Heart left ventricle (tissue), 16 donors: ENCODE measurements at regions of chr15 and their contacts with region 1.

Region 1: GRCh38 chr15:71114896-71115554 is at the start of gene THSD4:
- DNase-seq: peak; percentile 71 to 83 (median 79)
- ATAC-seq: peak; percentile 27 to 71 (median 66)
- H3K4me3 ChIP-seq: peak within 1 kb of the TSS; percentile 57 to 90 (median 71)
- H3K27ac ChIP-seq: peak within 1 kb of the TSS; percentile 78 to 95 (median 90)
- H3K4me1 ChIP-seq: peaks cover 0 to 27% (median 5%) of the 10 kb centered on the region in 12 donors
- H3K27me3 ChIP-seq: peaks cover 0 to 29% (median 0%) of the 10 kb centered on the region in 9 donors
- CTCF ChIP-seq: peak; percentile 91 to 99 (median 96)
- POLR2A ChIP-seq: no peak
- total RNA-seq, gene THSD4: 57.4 to 206 (median 104) TPM

Region 2: DNA sequence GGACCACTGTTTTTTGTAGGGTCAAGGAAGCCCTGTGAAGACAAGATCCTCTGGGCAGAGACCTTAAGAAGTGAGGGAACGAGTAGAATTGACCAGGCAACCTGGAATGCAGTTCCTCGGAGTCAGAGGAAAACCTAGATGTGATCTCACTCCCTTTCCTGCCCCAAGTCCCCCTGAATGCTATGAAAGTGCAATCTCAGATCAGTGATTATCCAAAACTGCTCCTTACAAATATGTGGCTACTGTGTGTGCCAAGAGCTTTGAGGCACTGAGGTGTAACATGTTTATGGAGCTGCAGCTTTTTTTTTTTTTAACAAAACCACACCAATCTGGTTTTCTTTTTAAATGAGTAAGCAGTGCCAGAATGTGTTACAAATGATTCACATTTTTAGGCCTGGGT is 36.1 kb after region 1 on chr15:
- intact Hi-C with region 1: loop called in 2 of 10 experiments (anchors 2 to 5 kb)
- DNase-seq: no peak
- ATAC-seq: no peak
- H3K4me3 ChIP-seq: no peak overlapping the region
- H3K27ac ChIP-seq: peak overlapping the region in 11 of 12 donors; percentile 69 to 87 (median 83)
- H3K4me1 ChIP-seq: peaks cover 0 to 87% (median 37%) of the 10 kb centered on the region in 12 donors
- H3K27me3 ChIP-seq: no peaks in the 10 kb centered on the region
- CTCF ChIP-seq: no peak
- POLR2A ChIP-seq: no peak

Region 3: DNA sequence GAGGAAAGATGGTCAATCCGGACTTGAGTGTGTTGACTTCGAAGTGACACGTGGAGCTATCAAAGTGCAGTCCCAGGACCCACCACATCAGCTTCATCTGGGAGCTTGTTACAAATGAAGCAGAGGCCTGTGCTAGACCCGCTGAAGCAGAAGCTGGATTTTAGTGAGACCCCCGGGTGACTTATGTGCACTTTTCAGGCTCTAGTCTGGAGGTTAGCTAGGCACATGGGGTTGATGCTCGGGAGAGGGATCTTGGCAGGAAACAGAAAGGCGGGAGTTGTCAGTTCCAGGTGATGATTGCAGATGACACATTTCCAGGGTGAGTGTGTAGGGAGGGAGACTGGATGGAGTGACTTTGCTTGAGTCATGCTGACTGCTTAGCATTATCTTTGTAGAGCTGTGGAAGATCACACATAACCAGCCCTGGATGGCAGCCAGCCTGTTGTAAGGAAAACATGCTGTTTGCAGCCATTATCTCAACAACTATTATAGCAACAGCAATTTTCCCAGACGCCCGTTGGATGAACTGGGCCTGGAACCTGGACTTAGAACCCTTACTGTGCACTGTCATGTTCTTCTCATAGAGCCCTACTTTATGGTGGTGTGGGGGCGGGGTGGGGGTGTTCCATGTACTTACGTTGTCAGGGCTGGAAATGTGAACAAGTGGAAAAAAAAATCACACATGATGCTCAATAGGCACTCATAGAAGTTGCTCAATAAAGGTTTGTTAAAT is 122.6 kb after region 1 on chr15:
- intact Hi-C with region 1: loop called in 4 of 10 experiments (anchors 5 to 10 kb)
- DNase-seq: peak; percentile 77 to 93 (median 82)
- ATAC-seq: peak; percentile 92 to 97 (median 94)
- H3K4me3 ChIP-seq: no peak overlapping the region
- H3K27ac ChIP-seq: peak overlapping the region in 11 of 12 donors; percentile 5 to 70 (median 61)
- H3K4me1 ChIP-seq: peaks cover 0 to 50% (median 10%) of the 10 kb centered on the region in 12 donors
- H3K27me3 ChIP-seq: no peaks in the 10 kb centered on the region
- CTCF ChIP-seq: peak in 1 of 12 donors; percentile 7
- POLR2A ChIP-seq: no peak

Region 4: DNA sequence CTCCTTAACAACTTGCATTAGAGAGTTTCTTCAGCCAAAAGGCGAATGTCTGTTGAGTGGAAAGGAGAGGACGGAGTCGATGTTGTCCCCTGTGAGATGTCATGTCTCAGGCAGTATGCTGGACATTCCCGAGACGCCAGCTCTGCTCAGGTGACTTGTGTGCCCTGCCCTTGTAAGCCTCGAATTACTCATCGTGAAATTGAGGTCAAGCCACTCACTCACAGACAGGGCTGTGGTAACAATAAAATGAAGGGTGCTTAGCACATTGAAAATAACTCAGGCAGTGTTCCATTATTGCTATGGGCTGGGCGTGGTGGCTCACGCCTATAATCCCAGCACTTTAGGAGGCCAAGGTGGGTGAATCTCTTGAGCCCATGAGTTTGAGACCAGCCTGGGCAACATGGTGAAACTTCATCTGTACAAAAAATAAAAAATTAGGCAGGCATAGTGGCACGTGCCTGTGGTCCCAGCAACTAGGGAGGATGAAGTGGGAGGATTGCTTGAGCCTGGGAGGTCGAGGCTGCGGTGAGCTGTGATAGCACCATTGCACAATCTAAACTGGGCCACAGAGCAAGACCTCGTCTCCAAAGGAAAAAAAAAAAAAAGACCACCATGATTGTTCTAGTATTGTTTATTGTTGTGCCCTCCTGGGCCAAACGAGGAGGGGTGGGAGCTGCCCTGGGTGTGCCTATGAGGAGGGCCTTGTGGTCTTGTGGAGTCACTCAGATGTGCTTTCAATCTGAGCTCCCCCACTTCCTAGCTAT is 214.7 kb after region 1 on chr15:
- intact Hi-C with region 1: loop called in 1 of 10 experiments (anchors 2 kb)
- DNase-seq: peak in 3 of 5 donors; percentile 26 to 51 (median 47)
- ATAC-seq: peak; percentile 66 to 82 (median 74)
- H3K4me3 ChIP-seq: no peak overlapping the region
- H3K27ac ChIP-seq: peak overlapping the region; percentile 14 to 94 (median 78)
- H3K4me1 ChIP-seq: peaks cover 0 to 59% (median 26%) of the 10 kb centered on the region in 12 donors
- H3K27me3 ChIP-seq: no peaks in the 10 kb centered on the region
- CTCF ChIP-seq: no peak
- POLR2A ChIP-seq: no peak

Region 5: DNA sequence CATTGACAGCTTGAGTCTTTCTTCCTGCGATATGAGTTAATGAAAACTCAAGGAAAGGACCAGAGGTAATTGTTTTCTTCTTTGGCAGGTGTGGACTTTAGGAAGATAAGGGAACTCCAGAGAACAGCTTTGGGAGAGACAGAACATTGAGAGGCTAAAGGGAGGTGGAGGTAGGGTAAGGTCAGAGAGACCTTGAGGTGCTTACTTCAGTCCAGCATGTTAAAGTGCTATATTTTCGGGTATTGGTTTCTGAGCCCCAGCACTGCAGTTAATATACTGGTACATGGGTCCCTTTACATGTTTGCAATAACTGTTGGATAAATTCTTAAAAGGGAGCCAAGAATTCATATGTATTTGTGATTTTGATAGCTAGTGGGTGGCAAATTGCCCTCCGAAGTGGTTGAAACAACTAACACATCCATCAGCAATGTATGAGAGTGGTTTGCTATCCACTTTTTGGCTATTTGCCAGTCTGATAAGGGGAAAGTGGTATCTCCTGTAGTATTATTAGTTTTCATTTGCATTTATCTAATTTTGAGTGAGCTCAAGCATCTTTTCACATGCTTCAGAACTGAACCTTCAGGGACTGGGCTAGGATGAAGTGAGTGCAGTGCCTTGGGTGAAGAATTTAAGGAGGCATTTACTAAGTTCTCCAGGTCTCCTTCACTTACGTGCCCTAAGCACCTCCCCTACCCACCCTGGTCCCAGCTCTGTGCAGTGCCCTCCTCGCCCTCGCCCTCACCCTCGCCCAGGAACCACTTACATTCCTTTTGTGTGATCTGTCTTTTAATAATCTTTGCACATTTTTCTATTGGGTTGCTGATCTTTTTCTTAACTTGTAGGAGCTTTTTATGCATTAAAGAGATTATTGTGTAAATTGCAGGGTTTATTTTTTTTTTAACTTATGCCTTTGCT is 322.6 kb after region 1 on chr15:
- intact Hi-C with region 1: loop called (anchors 1 to 5 kb)
- DNase-seq: no peak
- ATAC-seq: peak in 1 of 4 donors; percentile 57
- H3K4me3 ChIP-seq: no peak overlapping the region
- H3K27ac ChIP-seq: peak overlapping the region in 4 of 12 donors; percentile 15 to 54 (median 36)
- H3K4me1 ChIP-seq: peaks cover 0 to 14% (median 6%) of the 10 kb centered on the region in 12 donors
- H3K27me3 ChIP-seq: no peaks in the 10 kb centered on the region
- CTCF ChIP-seq: no peak
- POLR2A ChIP-seq: no peak

Region 6: DNA sequence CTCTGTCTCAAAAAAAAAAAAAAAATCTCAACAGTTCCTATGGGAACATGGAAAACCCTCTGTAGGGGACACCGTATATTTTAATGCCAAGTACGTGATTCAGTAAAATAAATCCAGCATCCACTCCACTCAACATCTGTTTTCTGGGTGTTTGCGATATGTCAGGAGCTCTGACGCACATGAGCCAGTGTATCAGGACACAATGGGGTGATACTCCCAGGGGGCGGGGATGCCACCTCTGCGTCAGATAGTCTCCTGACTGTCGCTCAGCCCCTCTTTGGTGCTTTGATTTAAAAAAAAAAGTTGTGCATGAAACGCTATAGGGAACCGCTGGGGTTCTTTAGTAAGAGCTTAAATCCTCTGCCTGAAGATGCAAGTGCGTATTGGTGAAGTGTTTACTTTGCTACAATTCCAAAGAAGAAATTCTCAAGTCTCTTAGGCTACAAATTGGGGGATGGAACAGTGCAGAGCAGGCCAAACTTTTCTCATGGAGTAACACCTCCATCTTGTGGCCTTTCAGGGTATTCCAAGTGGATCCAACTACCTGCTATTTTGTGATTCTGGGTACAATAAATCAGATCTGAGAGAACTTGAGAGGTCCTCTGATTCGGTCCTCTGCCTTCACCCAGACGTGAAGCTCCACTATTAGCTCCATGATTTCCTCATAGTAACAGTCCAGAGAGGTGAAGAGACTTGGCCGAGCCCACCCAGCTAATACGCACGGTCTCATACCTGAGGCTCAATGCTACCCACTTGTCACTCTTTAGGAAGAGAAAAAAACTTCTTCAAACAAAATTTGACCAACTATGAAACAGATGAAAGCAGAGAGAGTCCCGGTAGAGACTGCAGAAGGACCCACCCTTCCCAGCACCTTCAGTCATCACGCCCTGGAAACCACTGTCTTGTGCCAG is 686.1 kb after region 1 on chr15:
- intact Hi-C with region 1: loop called in 2 of 10 experiments (anchors 10 kb)
- DNase-seq: no peak
- ATAC-seq: peak; percentile 57 to 84 (median 82)
- H3K4me3 ChIP-seq: no peak overlapping the region
- H3K27ac ChIP-seq: no peak overlapping the region
- H3K4me1 ChIP-seq: peaks cover 0 to 8% (median 2%) of the 10 kb centered on the region in 12 donors
- H3K27me3 ChIP-seq: no peaks in the 10 kb centered on the region
- CTCF ChIP-seq: peak; percentile 72 to 91 (median 84)
- POLR2A ChIP-seq: no peak